ENCODE measurements at regions of chr10 and their contacts with region 1.

Region 1: DNA sequence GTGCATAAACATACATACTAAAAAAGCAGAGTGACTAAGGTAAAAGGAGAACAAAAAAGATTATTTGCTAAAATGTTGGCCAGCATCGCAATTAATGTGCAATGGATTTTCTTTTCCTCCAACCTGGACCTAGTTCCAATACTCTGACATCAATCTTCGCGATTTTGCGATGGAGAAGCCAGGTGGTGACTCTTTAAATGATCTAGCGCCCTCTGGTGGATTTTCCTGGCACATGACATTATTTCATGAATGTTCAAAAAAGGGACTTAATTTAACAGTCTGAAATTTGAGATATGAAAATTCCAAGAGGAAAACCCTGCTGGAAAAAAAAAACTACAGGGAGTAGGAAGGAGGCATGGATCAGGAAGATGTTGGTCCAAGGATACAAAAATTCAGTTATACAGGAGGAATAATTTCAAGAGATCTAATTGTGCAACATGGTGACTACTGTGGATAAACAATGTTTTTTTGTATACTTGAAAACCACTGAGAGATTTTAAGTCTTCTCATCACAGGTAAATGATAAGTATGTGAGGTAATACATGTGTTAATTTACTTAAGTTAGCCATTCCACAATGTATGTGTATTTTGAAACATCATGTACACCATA is 4.3 kb upstream of the KCNMA1 start:
- DNase-seq: peak; percentile 56
- ATAC-seq: no peak
- H3K4me3 Mint-ChIP-seq: no peak overlapping the region
- H3K27ac Mint-ChIP-seq: no peak overlapping the region
- H3K4me1 Mint-ChIP-seq: peaks cover 8% of the 10 kb centered on the region
- H3K27me3 Mint-ChIP-seq: peaks cover 45% of the 10 kb centered on the region
- CTCF ChIP-seq: peak; percentile 74

Region 2: DNA sequence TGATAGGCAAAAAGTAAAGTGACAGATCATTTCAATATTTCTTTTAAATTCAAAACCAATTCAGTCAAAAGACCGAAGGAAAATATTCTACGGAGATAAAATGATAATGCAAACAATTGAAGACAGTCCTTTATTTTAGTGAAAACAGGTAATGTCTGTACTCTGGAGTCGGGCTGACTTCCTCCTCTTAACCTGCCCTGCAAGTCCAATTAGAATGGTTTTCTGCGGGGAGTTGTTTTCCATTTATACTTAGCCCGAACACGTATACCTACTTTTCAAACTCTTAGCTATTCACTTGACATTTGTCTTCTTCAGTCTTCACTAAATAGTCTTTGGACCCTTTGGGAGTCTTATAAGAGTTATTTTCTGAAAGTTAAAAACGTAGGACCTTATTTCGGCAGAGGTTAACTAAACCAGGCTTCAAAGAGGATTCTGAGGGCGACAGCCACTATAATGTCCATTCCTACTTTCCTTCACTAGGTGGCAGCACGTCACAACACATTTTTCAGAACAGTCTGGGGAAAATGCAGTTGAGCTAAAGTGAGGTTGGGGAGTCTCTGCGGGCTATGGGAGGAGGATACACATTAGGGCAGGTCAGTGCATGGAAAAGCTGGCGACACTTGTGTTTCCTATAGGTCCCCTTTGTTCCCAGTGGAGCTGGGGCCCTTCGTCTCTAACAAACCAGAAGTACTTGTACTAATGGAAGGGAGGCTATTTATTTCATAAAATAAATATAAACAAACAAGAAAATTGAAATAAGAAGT is 476.3 kb before region 1 on chr10:
- CTCF ChIA-PET with region 1: interaction called, 13 read pairs
- POLR2A ChIA-PET with region 1: no interaction called
- DNase-seq: peak; percentile 59
- ATAC-seq: peak; percentile 99
- H3K4me3 Mint-ChIP-seq: peak overlapping the region; percentile 19; the same call in 1 of the 2 replicates
- H3K27ac Mint-ChIP-seq: 0 out of 2 replicates have a peak overlapping the region, but pooled peaks have one; percentile 66
- H3K4me1 Mint-ChIP-seq: peaks cover 5% of the 10 kb centered on the region
- H3K27me3 Mint-ChIP-seq: no peaks in the 10 kb centered on the region
- CTCF ChIP-seq: 0 out of 2 replicates have a peak, but pooled peaks have one; percentile 52

Region 3: DNA sequence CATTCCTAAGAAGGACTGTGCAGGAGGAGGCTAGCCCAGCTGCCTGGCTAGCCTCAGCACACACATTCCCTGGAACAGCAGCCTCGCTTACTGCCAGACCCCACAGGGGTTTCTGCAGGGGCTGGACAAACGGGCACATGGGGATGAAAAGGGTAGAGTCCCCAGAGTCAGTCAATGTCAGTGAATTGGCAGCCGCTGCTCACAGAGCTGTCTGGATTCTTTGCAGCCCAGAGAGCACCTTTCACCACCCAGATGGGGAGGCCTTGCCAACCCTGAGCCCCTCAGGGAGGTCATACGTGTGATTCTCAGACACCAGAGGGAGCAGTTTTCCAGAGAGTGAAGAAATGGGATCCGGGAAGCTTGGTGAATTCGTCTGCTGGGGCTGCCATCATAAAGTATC is 147.6 kb before region 1 on chr10:
- CTCF ChIA-PET with region 1: interaction called, 22 read pairs
- POLR2A ChIA-PET with region 1: no interaction called
- DNase-seq: peak; percentile 38
- ATAC-seq: peak; percentile 82
- H3K4me3 Mint-ChIP-seq: no peak overlapping the region
- H3K27ac Mint-ChIP-seq: no peak overlapping the region
- H3K4me1 Mint-ChIP-seq: peaks cover 2% of the 10 kb centered on the region
- H3K27me3 Mint-ChIP-seq: no peaks in the 10 kb centered on the region
- CTCF ChIP-seq: 0 out of 2 replicates have a peak, but pooled peaks have one; percentile 26

Region 4: DNA sequence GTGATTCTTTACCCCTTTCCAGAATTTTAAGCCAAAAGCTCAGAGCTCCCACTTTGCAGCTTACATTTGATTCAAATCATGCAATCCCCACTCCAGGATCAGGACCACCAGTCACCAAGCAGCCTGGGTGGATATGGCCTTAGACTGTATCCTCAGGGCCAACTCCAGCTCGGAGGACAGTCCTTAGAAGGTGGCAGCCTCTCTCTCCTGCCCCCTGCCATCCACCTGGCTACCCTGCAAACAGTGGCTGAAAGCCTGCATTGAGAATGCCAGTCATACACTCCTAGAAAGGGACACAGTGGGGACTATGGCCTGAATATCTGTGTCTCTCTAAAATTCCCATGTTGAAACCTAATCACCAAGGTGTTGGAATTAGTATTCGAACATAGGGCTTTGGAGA is 45.7 kb after region 1 on chr10:
- CTCF ChIA-PET with region 1: no interaction called
- POLR2A ChIA-PET with region 1: no interaction called
- DNase-seq: no peak
- ATAC-seq: peak; percentile 74
- H3K4me3 Mint-ChIP-seq: no peak overlapping the region
- H3K27ac Mint-ChIP-seq: no peak overlapping the region
- H3K4me1 Mint-ChIP-seq: peaks cover 23% of the 10 kb centered on the region
- H3K27me3 Mint-ChIP-seq: no peaks in the 10 kb centered on the region
- CTCF ChIP-seq: no peak